ENCODE measurements at regions of chr11 and their contacts with region 1.

Region 1: DNA sequence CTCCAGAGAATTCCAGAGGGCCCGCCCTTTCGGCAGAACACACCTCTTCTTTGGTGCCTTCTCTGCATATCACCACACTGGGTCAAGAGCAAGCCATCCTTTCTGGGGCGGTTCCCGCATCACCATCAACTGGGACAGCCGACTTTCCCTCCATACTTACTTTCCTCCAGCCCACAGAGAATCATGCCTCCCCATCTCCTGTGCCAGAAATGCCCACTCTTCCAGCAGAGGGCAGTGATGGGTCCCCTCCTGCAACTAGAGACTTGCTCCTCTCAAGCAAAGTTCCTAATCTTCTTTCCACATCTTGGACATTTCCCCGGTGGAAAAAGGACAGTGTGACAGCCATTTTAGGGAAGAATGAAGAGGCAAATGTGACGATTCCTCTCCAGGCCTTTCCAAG is 157.7 kb downstream of the C11orf91 start:
- DNase-seq: peak; percentile 53 to 80 (median 66)
- H3K4me3 ChIP-seq: no peak overlapping the region
- H3K27ac ChIP-seq: no peak overlapping the region
- H3K4me1 ChIP-seq: no peaks in the 10 kb centered on the region
- H3K27me3 ChIP-seq: no peaks in the 10 kb centered on the region
- CTCF ChIP-seq: peak; percentile 42 to 67 (median 63)
- POLR2A ChIP-seq: no peak

Region 2: DNA sequence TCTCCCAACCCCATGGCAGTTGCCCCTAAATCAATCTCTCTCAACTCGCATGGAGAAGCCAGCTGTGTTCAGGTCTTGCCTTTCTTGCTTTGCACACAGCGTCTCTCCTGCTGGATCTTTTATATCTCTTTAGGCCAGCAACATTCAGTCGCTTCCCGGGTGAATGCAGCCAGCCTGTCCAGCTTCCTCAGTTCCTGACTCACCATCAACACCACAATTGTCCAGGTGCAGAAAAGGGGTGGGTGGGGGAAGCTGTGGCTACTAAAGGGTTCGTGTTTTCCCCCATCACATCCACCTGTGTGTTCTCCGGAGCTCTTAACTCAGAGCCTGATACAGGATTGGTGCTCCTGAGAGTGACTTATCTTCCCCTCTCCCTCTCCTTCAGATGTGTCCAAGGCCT is 169.3 kb before region 1 on chr11:
- intact Hi-C with region 1: loop called in 1 of 2 experiments (anchors 5 kb)
- DNase-seq: no peak
- H3K4me3 ChIP-seq: no peak overlapping the region
- H3K27ac ChIP-seq: no peak overlapping the region
- H3K4me1 ChIP-seq: peaks cover 0 to 7% of the 10 kb centered on the region in 2 donors
- H3K27me3 ChIP-seq: peaks cover 34% of the 10 kb centered on the region
- CTCF ChIP-seq: no peak
- POLR2A ChIP-seq: no peak

Region 3: DNA sequence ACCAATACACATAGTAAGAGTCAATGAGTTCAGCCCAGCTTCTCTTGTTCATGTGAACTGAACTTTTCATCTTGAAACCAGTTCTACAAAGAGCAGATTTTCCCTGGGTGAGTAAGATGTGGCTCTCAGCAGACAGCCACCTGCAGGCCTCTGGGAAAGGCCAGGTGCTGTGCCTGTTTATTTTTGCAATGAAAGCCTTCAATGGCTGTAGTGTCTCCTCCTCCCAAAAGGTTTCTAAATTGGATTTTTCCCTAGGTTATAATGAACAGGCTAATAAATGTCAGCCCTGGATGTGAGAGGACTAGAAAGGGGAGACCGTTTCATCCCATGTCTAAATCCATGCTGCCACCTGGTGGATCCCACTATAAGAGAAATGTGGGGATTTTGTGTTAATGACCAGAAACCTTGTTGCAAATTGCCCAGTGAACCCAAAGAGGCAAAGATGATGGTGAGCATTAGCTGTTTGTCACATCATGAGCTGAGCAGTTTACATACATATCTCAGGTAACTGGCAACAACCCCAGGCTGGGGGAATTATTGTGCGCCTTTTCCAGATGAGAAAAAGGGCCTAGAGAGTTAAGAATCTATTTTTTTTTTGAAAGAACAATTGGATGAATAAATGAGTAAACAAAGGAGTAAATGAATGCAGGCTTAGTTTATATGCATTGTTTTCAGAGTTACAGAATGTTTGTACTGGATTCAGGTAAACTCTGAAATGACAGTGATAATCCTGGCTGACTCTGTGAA is 145.0 kb after region 1 on chr11:
- intact Hi-C with region 1: loop called (anchors 5 to 10 kb)
- DNase-seq: peak; percentile 50 to 76 (median 62)
- H3K4me3 ChIP-seq: no peak overlapping the region
- H3K27ac ChIP-seq: no peak overlapping the region
- H3K4me1 ChIP-seq: peaks cover 5 to 19% of the 10 kb centered on the region in 2 donors
- H3K27me3 ChIP-seq: no peaks in the 10 kb centered on the region
- CTCF ChIP-seq: peak; percentile 41 to 83 (median 74)
- POLR2A ChIP-seq: no peak

Region 4: GRCh38 chr11:34086554-34087283 is 543.8 kb after region 1 on chr11:
- intact Hi-C with region 1: no loop called
- DNase-seq: no peak
- H3K4me3 ChIP-seq: no peak overlapping the region
- H3K27ac ChIP-seq: no peak overlapping the region
- H3K4me1 ChIP-seq: no peaks in the 10 kb centered on the region
- H3K27me3 ChIP-seq: no peaks in the 10 kb centered on the region
- CTCF ChIP-seq: no peak
- POLR2A ChIP-seq: no peak

Measured in adrenal gland (tissue), 19 donors.